Panc1 (cell line): ENCODE measurements at regions of chr3 and their contacts with region 1.

Region 1: GRCh38 chr3:74850381-74850780 is 235.9 kb upstream of the CNTN3 start:
- DNase-seq: no peak
- ATAC-seq: no peak
- H3K4me3 ChIP-seq: no peak overlapping the region
- H3K27ac ChIP-seq: no peak overlapping the region
- H3K4me1 ChIP-seq: no peaks in the 10 kb centered on the region
- H3K27me3 ChIP-seq: no peaks in the 10 kb centered on the region
- CTCF ChIP-seq: no peak

Region 2: DNA sequence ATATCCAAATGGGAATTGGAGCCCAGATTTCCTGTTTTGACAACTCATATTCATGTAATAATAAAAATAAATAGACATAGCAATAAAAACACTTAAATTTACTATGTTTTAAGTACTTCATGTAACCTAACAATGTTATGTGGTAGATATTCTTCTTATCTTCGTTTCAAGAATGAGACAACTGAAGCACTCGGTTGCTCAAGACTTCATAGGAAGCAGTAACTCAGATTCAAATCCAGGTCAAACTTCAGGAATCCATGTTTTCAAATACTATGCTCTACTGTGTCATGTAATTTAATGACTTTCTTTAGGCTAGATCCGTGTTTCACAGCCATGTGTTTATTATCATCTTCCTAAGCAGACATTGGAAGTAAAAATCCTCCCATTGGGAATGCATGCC is 728.1 kb before region 1 on chr3:
- CTCF ChIA-PET with region 1: no interaction called
- POLR2A ChIA-PET with region 1: interaction called, 19 read pairs
- in situ Hi-C with region 1: no loop called
- intact Hi-C with region 1: no loop called
- DNase-seq: no peak
- ATAC-seq: no peak
- H3K4me3 ChIP-seq: no peak overlapping the region
- H3K27ac ChIP-seq: no peak overlapping the region
- H3K4me1 ChIP-seq: no peaks in the 10 kb centered on the region
- H3K27me3 ChIP-seq: no peaks in the 10 kb centered on the region
- CTCF ChIP-seq: no peak

Region 3: GRCh38 chr3:75610773-75611172 is 760.4 kb after region 1 on chr3:
- CTCF ChIA-PET with region 1: no interaction called
- POLR2A ChIA-PET with region 1: no interaction called
- in situ Hi-C with region 1: no loop called
- intact Hi-C with region 1: no loop called
- DNase-seq: no peak
- ATAC-seq: no peak
- H3K4me3 ChIP-seq: no peak overlapping the region
- H3K27ac ChIP-seq: no peak overlapping the region
- H3K4me1 ChIP-seq: no peaks in the 10 kb centered on the region
- H3K27me3 ChIP-seq: no peaks in the 10 kb centered on the region
- CTCF ChIP-seq: no peak